CD4-positive, alpha-beta memory T cell (primary cell): ENCODE measurements at regions of chr17 and their contacts with region 1.

Region 1: GRCh38 chr17:2847381-2848333 is 51.4 kb downstream of the RAP1GAP2 start:
- DNase-seq: no peak
- H3K4me3 ChIP-seq: no peak overlapping the region
- H3K4me3 Mint-ChIP-seq: peak overlapping the region in 1 of 8 donors; percentile 7
- H3K27ac ChIP-seq: no peak overlapping the region
- H3K27ac Mint-ChIP-seq: peak overlapping the region in 2 of 7 donors; percentile 9 to 48
- H3K4me1 ChIP-seq: peaks cover 14% of the 10 kb centered on the region
- H3K4me1 Mint-ChIP-seq: peaks cover 12 to 32% (median 22%) of the 10 kb centered on the region in 4 donors
- H3K27me3 ChIP-seq: no peaks in the 10 kb centered on the region
- H3K27me3 Mint-ChIP-seq: peaks cover 0 to 2% of the 10 kb centered on the region in 2 donors

Region 2: DNA sequence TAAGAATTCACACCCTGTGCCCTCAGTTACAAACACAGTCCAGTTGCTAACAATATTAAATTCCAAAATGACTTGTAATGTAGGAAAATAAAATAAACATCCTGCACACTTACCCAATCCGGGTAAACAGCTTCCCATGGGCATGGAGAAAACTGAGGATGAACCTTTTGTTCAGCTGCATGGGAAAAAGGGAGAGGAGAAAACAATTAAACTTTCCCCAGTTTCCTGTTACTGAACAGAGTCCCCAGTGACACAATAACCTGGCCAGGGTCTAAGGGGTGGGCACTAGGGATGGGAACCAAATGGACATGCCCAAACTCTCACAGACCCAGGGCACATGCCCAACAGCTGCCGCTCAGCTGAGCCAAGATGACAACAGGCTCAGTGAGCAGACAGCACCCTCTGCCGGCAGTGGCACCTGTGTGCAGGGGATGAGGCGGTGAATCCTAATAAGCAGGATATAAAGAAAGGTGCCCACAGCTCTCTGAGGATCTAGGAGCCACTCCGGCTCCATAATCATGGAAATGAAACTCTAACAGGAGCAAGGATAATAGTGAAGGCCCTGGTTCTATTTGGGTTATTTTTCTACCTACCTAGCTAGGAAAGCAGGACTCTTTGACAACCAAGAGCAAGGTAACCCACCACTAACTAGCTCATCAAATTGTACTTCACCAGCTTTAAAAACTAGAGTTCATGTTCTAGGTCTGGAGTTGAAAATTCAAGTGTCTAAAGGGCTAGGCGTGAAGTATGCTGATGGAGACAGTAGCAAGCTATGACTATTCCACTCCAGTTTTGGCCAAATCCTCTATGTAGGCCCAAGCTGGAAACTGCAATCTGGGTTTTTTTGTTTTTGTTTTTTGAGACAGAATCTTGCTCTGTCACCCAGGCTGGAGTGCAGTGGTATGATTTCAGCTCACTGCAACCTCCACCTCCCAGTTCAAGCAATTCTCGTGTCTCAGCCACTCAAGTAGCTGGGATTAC is 602.8 kb before region 1 on chr17:
- CTCF ChIA-PET with region 1: no interaction called
- POLR2A ChIA-PET with region 1: no interaction called
- intact Hi-C with region 1: no loop called
- DNase-seq: peak; percentile 73 to 79 (median 76)
- H3K4me3 ChIP-seq: no peak overlapping the region
- H3K4me3 Mint-ChIP-seq: no peak overlapping the region
- H3K27ac ChIP-seq: no peak overlapping the region
- H3K27ac Mint-ChIP-seq: peak overlapping the region; percentile 48 to 93 (median 82)
- H3K4me1 ChIP-seq: no peaks in the 10 kb centered on the region
- H3K4me1 Mint-ChIP-seq: peaks cover 15 to 38% (median 23%) of the 10 kb centered on the region in 4 donors
- H3K27me3 ChIP-seq: no peaks in the 10 kb centered on the region
- H3K27me3 Mint-ChIP-seq: no peaks in the 10 kb centered on the region

Region 3: DNA sequence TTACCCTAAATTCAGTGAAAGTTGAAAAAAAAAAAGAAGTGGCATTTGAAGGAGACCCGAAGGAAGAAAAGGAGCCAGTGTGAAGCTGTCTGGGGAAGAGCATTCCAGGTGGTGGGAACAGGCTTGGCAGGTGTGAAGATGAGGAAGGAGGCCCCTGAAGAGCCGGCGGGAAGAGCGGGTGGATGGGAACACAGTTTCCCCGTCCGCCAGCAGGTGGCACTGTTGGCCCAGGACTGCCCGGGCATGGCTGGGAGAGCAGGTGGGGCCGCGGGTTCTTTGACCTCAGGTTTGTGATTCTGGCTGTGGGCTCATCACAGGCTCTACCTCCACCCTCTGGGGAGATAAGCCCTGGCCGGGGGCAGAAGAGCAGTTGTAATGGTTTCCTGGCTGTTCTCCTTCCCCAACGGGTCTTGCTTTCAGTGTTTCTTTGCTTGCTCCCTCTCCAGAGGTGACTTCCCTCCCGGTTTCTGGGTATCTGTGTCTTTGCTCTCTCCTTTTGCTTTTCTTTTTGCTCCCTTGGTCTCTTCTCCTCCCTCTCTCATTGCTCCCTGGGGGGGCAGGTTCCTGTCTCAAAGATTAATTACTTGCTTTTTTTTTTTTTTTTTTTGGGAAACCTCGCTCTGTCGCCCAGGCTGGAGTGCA is 19.1 kb before region 1 on chr17:
- CTCF ChIA-PET with region 1: interaction called, 11 read pairs
- POLR2A ChIA-PET with region 1: no interaction called
- intact Hi-C with region 1: no loop called
- DNase-seq: peak; percentile 67 to 76 (median 71)
- H3K4me3 ChIP-seq: no peak overlapping the region
- H3K4me3 Mint-ChIP-seq: peak overlapping the region in 7 of 8 donors; percentile 42 to 70 (median 57)
- H3K27ac ChIP-seq: no peak overlapping the region
- H3K27ac Mint-ChIP-seq: peak overlapping the region in 5 of 7 donors; percentile 5 to 93 (median 67)
- H3K4me1 ChIP-seq: peaks cover 24% of the 10 kb centered on the region
- H3K4me1 Mint-ChIP-seq: peaks cover 20 to 40% (median 22%) of the 10 kb centered on the region in 4 donors
- H3K27me3 ChIP-seq: no peaks in the 10 kb centered on the region
- H3K27me3 Mint-ChIP-seq: peaks cover 0 to 1% of the 10 kb centered on the region in 2 donors

Region 4: DNA sequence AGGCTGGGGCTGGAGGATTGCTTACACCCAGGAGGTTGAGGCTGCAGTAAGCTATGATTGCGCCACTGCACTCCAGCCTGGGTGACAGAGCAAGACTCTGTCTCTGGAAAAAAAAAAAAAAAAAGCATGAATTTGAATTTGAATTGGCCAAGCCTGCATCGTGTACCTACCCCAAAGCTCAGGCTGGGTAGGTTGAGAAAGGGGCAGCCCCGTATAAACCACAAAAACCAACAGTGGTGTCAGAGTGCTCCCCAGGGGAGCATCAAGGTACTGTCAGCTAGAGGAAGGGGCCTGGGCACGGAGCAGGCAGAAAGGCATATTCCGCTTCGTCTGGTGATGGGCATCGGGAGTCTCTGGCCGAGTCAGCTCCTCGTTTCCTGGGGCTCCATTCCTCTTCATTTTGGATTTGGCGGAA is 10.5 kb before region 1 on chr17:
- CTCF ChIA-PET with region 1: interaction called, 14 read pairs
- POLR2A ChIA-PET with region 1: no interaction called
- intact Hi-C with region 1: no loop called
- DNase-seq: peak; percentile 48 to 65 (median 61)
- H3K4me3 ChIP-seq: no peak overlapping the region
- H3K4me3 Mint-ChIP-seq: no peak overlapping the region
- H3K27ac ChIP-seq: no peak overlapping the region
- H3K27ac Mint-ChIP-seq: peak overlapping the region in 2 of 7 donors; percentile 19 to 41
- H3K4me1 ChIP-seq: peaks cover 6% of the 10 kb centered on the region
- H3K4me1 Mint-ChIP-seq: peaks cover 7 to 24% (median 12%) of the 10 kb centered on the region in 4 donors
- H3K27me3 ChIP-seq: no peaks in the 10 kb centered on the region
- H3K27me3 Mint-ChIP-seq: no peaks in the 10 kb centered on the region

Region 5: DNA sequence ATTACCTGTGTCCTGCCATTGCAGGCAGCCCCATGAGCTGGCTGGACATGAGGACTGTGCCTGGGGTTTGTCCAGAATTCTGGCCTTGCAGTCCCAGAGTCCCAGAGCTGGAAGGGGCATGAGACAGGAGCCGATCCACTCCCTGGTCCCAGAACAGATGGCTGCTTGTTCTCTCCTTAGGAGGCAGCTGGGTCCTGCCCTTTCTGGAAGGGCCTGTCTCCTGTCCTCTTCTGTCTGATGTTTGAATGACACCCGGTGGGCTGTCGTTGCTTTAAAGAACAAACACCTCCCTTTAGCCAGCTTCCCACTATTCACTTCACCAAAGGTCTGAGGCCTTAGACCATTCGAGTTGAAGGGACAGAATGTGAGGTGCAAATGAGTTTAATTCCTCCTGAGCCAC is 12.4 kb after region 1 on chr17:
- CTCF ChIA-PET with region 1: interaction called, 17 read pairs
- POLR2A ChIA-PET with region 1: interaction called, 3 read pairs
- intact Hi-C with region 1: no loop called
- DNase-seq: no peak
- H3K4me3 ChIP-seq: no peak overlapping the region
- H3K4me3 Mint-ChIP-seq: no peak overlapping the region
- H3K27ac ChIP-seq: no peak overlapping the region
- H3K27ac Mint-ChIP-seq: peak overlapping the region in 2 of 7 donors; percentile 13 to 52
- H3K4me1 ChIP-seq: peaks cover 4% of the 10 kb centered on the region
- H3K4me1 Mint-ChIP-seq: peaks cover 16 to 35% (median 18%) of the 10 kb centered on the region in 4 donors
- H3K27me3 ChIP-seq: no peaks in the 10 kb centered on the region
- H3K27me3 Mint-ChIP-seq: no peaks in the 10 kb centered on the region

Region 6: DNA sequence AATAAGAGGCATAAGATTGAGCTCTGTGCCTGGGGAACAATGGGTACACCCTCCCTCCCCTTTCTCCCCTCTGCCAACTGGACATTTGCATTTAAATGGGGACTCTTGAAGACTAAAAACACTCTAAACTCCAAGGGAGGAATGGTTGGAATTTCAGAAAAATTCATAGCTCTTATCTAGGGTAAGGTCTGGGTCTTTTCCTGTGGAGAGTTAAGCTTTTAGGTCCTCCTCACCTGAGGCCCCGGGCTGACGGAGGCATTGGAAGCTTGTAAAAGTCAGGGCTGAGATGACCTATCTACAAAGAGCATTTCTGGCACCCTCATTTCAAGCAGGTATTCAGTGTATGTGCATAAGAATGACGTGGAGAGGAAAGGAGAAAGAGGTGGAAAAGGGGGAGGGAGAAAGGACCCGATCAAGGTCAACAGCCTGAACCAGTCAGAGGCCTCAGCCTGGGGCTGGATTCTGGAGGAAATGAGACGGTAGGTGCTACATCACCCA is 26.6 kb after region 1 on chr17:
- CTCF ChIA-PET with region 1: interaction called, 12 read pairs
- POLR2A ChIA-PET with region 1: no interaction called
- intact Hi-C with region 1: no loop called
- DNase-seq: no peak
- H3K4me3 ChIP-seq: no peak overlapping the region
- H3K4me3 Mint-ChIP-seq: no peak overlapping the region
- H3K27ac ChIP-seq: no peak overlapping the region
- H3K27ac Mint-ChIP-seq: peak overlapping the region in 2 of 7 donors; percentile 18 to 62
- H3K4me1 ChIP-seq: no peaks in the 10 kb centered on the region
- H3K4me1 Mint-ChIP-seq: peaks cover 18 to 32% (median 29%) of the 10 kb centered on the region in 4 donors
- H3K27me3 ChIP-seq: no peaks in the 10 kb centered on the region
- H3K27me3 Mint-ChIP-seq: no peaks in the 10 kb centered on the region

Region 7: GRCh38 chr17:2929881-2930533 is 82.3 kb after region 1 on chr17:
- CTCF ChIA-PET with region 1: interaction called, 26 read pairs
- POLR2A ChIA-PET with region 1: interaction called, 3 read pairs
- intact Hi-C with region 1: loop called (anchors 1 kb)
- DNase-seq: peak in 1 of 5 donors; percentile 6
- H3K4me3 ChIP-seq: no peak overlapping the region
- H3K4me3 Mint-ChIP-seq: no peak overlapping the region
- H3K27ac ChIP-seq: no peak overlapping the region
- H3K27ac Mint-ChIP-seq: no peak overlapping the region
- H3K4me1 ChIP-seq: peaks cover 5% of the 10 kb centered on the region
- H3K4me1 Mint-ChIP-seq: peaks cover 13 to 41% (median 17%) of the 10 kb centered on the region in 4 donors
- H3K27me3 ChIP-seq: no peaks in the 10 kb centered on the region
- H3K27me3 Mint-ChIP-seq: no peaks in the 10 kb centered on the region

Region 8: GRCh38 chr17:2954898-2955445 is 107.3 kb after region 1 on chr17:
- CTCF ChIA-PET with region 1: no interaction called
- POLR2A ChIA-PET with region 1: no interaction called
- intact Hi-C with region 1: no loop called
- DNase-seq: no peak
- H3K4me3 ChIP-seq: no peak overlapping the region
- H3K4me3 Mint-ChIP-seq: peak overlapping the region in 5 of 8 donors; percentile 1 to 60 (median 27)
- H3K27ac ChIP-seq: no peak overlapping the region
- H3K27ac Mint-ChIP-seq: peak overlapping the region in 1 of 7 donors; percentile 51
- H3K4me1 ChIP-seq: peaks cover 14% of the 10 kb centered on the region
- H3K4me1 Mint-ChIP-seq: peaks cover 19 to 45% (median 23%) of the 10 kb centered on the region in 4 donors
- H3K27me3 ChIP-seq: no peaks in the 10 kb centered on the region
- H3K27me3 Mint-ChIP-seq: no peaks in the 10 kb centered on the region

Region 9: GRCh38 chr17:3012926-3013581 is 165.4 kb after region 1 on chr17:
- CTCF ChIA-PET with region 1: interaction called, 65 read pairs
- POLR2A ChIA-PET with region 1: interaction called, 7 read pairs
- intact Hi-C with region 1: loop called (anchors 1 kb)
- DNase-seq: peak in 4 of 5 donors; percentile 24 to 36 (median 30)
- H3K4me3 ChIP-seq: no peak overlapping the region
- H3K4me3 Mint-ChIP-seq: no peak overlapping the region
- H3K27ac ChIP-seq: no peak overlapping the region
- H3K27ac Mint-ChIP-seq: peak overlapping the region in 3 of 7 donors; percentile 10 to 29 (median 29)
- H3K4me1 ChIP-seq: no peaks in the 10 kb centered on the region
- H3K4me1 Mint-ChIP-seq: no peaks in the 10 kb centered on the region
- H3K27me3 ChIP-seq: no peaks in the 10 kb centered on the region
- H3K27me3 Mint-ChIP-seq: no peaks in the 10 kb centered on the region